ENCODE measurements at regions of chrX and their contacts with region 1.

Region 1: DNA sequence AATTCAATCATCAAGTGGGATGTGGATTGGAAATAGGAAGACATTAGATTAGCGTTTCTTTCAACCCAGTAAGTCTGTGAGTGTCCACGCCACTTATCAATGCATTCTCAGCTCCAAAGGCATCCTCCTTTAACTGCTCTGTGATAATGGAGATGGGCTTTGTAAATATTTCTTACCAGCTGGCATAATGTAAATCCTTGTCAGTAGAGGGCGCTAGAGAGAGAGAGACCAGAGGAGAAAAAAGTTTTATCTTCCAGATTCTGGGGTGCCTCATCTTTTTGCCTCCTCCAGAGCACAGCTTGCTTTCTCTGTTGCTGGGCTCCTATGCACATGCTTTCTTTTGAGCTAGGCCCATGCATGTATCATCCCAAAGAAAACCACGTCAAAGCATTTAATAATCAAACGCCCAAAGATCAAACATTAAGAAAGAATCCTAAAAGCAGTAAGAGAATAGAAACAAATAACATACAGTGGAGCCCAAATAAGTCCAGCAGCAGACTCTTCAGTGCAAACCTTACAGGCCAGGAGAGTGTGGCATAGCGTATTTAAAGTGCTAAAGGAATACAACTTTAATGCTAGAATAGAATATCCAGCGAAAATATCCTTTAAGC is 9.6 kb upstream of the MTMR1 start:
- DNase-seq: peak; percentile 33
- ATAC-seq: peak; percentile 32; the same call in 1 of the 2 replicates
- H3K4me3 ChIP-seq: no peak overlapping the region
- H3K27ac ChIP-seq: no peak overlapping the region
- H3K4me1 ChIP-seq: peaks cover 4% of the 10 kb centered on the region
- H3K27me3 ChIP-seq: no peaks in the 10 kb centered on the region
- CTCF ChIP-seq: peak; percentile 51
- POLR2A ChIP-seq: no peak
- RAD21 ChIP-seq: peak; percentile 37

Region 2: GRCh38 chrX:150525061-150525919 is 158.4 kb before region 1 on chrX:
- CTCF ChIA-PET with region 1: no interaction called
- POLR2A ChIA-PET with region 1: no interaction called
- dilution Hi-C with region 1: no loop called
- in situ Hi-C with region 1: no loop called
- intact Hi-C with region 1: no loop called
- DNase-seq: no peak
- ATAC-seq: no peak
- H3K4me3 ChIP-seq: no peak overlapping the region
- H3K27ac ChIP-seq: no peak overlapping the region
- H3K4me1 ChIP-seq: no peaks in the 10 kb centered on the region
- H3K27me3 ChIP-seq: no peaks in the 10 kb centered on the region; the same call in none of the 2 replicates
- CTCF ChIP-seq: no peak
- POLR2A ChIP-seq: no peak
- RAD21 ChIP-seq: no peak

Region 3: DNA sequence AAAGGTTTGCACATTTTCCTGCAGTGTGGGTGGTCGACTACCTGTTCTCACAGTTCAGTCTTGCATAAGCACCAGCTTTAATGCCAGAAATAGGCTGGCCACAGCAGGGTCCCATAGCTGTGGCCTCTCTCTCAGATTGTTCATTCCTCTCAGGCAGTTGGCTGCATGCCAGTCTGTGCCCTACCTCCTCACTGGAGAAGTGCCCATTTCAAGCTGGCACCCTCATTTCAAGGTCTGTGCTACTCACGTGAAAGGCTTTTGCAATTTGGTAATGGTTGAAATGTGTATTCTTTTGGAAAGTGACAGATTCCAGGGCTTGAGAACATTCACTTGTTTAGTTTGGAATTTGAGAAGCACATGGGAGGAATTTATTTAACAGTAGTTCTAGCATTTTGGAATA is 19.4 kb before region 1 on chrX:
- CTCF ChIA-PET with region 1: no interaction called
- POLR2A ChIA-PET with region 1: no interaction called
- dilution Hi-C with region 1: no loop called
- in situ Hi-C with region 1: no loop called
- intact Hi-C with region 1: loop called (anchors 2 kb)
- DNase-seq: no peak
- ATAC-seq: no peak
- H3K4me3 ChIP-seq: no peak overlapping the region
- H3K27ac ChIP-seq: no peak overlapping the region
- H3K4me1 ChIP-seq: peaks cover 3% of the 10 kb centered on the region
- H3K27me3 ChIP-seq: no peaks in the 10 kb centered on the region
- CTCF ChIP-seq: no peak
- POLR2A ChIP-seq: no peak
- RAD21 ChIP-seq: no peak